ENCODE measurements at regions of chr17 and their contacts with region 1.

Region 1: DNA sequence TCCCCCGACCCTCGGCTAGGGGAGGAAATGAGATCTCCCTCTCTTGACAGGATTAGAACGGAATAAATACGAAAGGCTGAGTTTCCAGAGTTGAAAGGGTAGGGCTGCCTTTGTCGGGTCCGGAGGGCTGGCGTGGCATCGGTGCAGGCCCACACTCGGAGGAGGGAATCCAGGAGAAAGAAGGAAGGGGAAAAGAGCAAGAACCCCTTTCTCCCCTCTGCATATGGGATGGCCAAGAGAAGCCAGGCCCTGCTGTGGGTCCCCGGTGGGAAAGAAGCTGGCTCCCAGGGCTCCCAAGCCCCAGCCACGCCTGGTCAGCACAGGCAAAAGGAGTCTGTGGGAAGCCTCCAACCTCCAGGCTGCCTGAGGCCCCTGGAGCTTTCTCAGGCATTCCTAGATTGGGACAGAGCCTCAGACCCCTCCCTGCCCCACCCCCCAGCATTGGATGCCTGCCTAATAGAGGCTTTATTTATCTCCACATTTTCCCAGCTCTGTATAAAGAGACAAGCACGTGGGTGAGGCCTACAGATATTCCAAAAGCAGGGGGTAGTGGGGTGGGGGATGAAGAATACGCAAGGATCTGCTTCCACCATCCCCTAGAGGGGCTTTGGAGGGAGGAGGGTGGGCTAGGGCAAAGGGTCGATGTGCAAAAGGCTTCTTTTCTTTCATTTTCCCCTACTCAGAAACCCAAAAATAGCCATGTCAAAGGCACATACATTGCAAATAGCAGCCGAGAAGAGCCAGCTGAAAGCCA is 56.3 kb downstream of the MPRIP start:
- DNase-seq: peak; percentile 30
- H3K4me3 ChIP-seq: no peak overlapping the region
- H3K27ac ChIP-seq: peak overlapping the region; percentile 34
- H3K4me1 ChIP-seq: peaks cover 14% of the 10 kb centered on the region
- H3K27me3 ChIP-seq: no peaks in the 10 kb centered on the region

Region 2: DNA sequence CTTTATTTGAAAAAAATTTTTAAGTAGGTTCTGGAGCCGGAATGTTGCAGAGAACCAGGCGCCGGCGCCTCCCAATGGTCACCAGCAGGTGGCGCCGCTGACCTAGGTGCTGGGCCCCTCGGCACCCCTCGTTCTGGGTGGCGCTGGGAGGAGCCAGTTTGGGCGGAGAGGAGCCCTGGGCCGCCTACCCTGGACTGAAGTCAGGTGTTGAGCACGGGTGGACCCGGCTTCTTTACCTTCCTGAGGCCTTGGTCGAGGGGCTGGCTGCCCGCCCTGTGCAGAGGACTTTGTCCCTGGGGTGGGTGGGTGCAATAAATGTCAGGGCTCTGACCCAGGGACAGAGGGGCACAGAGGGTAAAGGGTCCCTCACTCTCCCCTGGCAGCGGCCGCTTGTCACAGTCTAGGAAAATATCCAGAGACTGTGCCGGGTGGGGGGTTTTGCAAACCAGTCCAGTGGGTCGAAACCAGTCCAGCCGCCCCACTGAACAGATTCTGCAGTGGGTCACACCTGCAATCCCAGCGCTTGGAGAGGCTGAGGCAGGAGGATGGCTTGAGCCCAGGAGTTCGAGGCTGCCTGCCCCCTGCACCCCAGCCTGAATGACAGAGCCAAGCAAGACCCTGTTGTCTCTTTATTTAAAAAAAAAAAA is 96.6 kb before region 1 on chr17:
- in situ Hi-C with region 1: loop called (anchors 10 kb)
- DNase-seq: peak; percentile 84
- H3K4me3 ChIP-seq: no peak overlapping the region
- H3K27ac ChIP-seq: no peak overlapping the region
- H3K4me1 ChIP-seq: no peaks in the 10 kb centered on the region
- H3K27me3 ChIP-seq: no peaks in the 10 kb centered on the region

Region 3: GRCh38 chr17:17021194-17021863 is 77.3 kb before region 1 on chr17:
- in situ Hi-C with region 1: no loop called
- DNase-seq: peak; percentile 86
- H3K4me3 ChIP-seq: no peak overlapping the region
- H3K27ac ChIP-seq: peak overlapping the region; percentile 75
- H3K4me1 ChIP-seq: peaks cover 15% of the 10 kb centered on the region
- H3K27me3 ChIP-seq: no peaks in the 10 kb centered on the region

Region 4: DNA sequence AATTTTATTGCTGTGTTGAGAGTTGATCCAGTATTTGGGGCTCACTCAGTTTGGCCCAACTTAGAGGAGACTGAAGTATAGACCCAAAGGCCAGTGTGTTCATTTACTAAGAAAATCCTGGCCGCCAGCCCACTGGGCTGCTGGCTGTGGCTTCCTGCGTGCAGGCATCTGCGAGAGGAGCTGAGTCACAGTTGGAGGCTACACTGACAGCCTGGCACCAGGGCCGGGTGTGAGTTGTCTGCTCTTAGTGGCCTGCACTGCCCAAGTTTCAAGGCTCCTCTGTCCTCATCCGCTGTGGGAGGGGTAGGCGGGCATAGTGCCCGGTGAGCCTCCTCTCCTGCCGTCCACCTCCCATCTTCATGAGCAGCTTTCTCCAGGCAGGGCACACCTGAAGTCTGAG is 53.4 kb after region 1 on chr17:
- in situ Hi-C with region 1: loop called (anchors 10 kb)
- DNase-seq: peak; percentile 100
- H3K4me3 ChIP-seq: no peak overlapping the region
- H3K27ac ChIP-seq: peak overlapping the region; percentile 92
- H3K4me1 ChIP-seq: peaks cover 57% of the 10 kb centered on the region
- H3K27me3 ChIP-seq: no peaks in the 10 kb centered on the region

Region 5: GRCh38 chr17:18158022-18158600 is 1059.5 kb after region 1 on chr17:
- in situ Hi-C with region 1: no loop called
- DNase-seq: peak; percentile 99
- H3K4me3 ChIP-seq: peak overlapping the region; percentile 57
- H3K27ac ChIP-seq: no peak overlapping the region
- H3K4me1 ChIP-seq: peaks cover 15% of the 10 kb centered on the region
- H3K27me3 ChIP-seq: no peaks in the 10 kb centered on the region